Gastrocnemius medialis (tissue), 4 donors: ENCODE measurements at regions of chr2 and their contacts with region 1.

Region 1: DNA sequence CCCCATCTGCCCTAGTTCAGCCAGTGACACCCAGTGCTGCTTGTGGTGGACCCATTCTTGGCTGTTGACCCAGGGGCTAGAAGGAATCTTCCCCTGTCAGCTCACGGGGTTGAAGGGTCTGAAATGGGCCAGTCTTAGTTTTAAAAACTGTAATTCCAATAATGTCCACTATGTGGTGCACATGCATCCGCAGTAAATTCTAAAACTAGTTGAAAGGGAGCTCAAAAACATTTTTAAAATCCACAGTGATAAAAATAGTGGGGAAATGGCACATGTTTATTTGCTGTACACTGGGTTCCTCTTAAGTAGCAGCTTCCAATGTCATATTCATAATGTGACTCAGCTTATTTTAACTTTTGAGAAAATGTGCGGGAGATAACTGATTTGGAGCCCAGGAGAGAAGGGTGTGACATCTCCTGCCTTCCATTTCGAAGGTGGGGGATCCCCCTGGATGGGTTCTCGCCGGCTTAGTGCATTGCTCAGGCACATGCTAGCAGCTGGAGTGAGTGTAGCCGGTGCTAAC is 32.8 kb downstream of the GRHL1 start:
- DNase-seq: no peak
- ATAC-seq: peak; percentile 55 to 71
- H3K4me3 ChIP-seq: peak overlapping the region in 1 of 4 donors; percentile 15
- H3K27ac ChIP-seq: peak overlapping the region in 3 of 4 donors; percentile 35 to 45 (median 41)
- H3K4me1 ChIP-seq: peaks cover 12 to 22% of the 10 kb centered on the region in 2 donors
- H3K27me3 ChIP-seq: no peaks in the 10 kb centered on the region
- CTCF ChIP-seq: peak; percentile 74 to 85 (median 82)
- POLR2A ChIP-seq: no peak

Region 2: DNA sequence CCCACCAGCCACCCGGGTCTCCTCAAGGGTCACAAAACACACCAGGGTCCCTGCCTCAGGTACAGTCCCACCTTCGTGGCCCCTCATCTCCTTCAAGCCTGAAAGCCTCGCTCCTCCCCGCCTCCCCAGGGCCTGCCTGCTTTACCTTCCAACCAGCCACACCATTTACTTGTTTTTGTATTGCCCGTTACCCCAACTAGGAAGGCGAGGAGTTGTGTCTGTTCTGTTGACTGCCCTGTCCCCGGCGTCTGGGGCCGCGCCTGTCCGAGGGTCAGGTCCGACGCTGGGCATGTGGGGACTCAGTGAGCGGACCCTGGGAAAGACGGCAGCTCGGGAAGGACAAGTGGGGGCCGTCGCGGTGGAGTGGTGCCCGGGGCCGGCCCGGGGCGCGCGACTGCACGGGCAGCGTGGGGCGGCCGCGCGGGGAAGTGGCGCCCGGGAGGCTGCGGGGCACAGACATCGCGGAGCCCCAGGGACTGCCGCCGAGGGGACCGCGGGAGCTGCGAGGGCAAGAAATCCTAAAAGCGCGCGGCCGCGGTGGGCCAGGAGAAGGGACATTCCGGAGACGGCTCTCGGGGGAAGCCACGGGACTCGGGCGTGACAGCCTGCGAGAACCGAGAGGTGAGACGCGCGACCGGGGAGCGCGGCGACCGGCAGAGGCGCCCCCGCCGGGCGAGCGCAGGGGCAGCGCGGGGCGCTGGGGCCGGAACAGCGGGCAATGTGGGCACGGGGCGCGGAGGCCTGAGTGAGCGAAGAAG is 33.6 kb before region 1 on chr2:
- in situ Hi-C with region 1: no loop called
- intact Hi-C with region 1: no loop called
- DNase-seq: peak in 1 of 2 donors; percentile 35
- ATAC-seq: peak; percentile 41 to 64
- H3K4me3 ChIP-seq: peak overlapping the region; percentile 54 to 82 (median 66)
- H3K27ac ChIP-seq: peak overlapping the region; percentile 71 to 77 (median 74)
- H3K4me1 ChIP-seq: peaks cover 0 to 5% of the 10 kb centered on the region in 2 donors
- H3K27me3 ChIP-seq: peaks cover 0 to 7% (median 0%) of the 10 kb centered on the region in 3 donors
- CTCF ChIP-seq: peak in 1 of 5 experiments; percentile 46
- POLR2A ChIP-seq: no peak

Region 3: GRCh38 chr2:10097352-10098148 is 113.3 kb after region 1 on chr2:
- in situ Hi-C with region 1: no loop called
- intact Hi-C with region 1: loop called (anchors 1 kb)
- DNase-seq: peak; percentile 30 to 39
- ATAC-seq: peak; percentile 66 to 80
- H3K4me3 ChIP-seq: no peak overlapping the region
- H3K27ac ChIP-seq: no peak overlapping the region
- H3K4me1 ChIP-seq: peaks cover 0 to 6% of the 10 kb centered on the region in 2 donors
- H3K27me3 ChIP-seq: no peaks in the 10 kb centered on the region
- CTCF ChIP-seq: peak; percentile 66 to 91 (median 79)
- POLR2A ChIP-seq: no peak